ENCODE measurements at regions of chr15 and their contacts with region 1.

Region 1: GRCh38 chr15:65638681-65639089 is 16.9 kb downstream of the SLC24A1 start:
- DNase-seq: peak; percentile 79
- H3K4me3 ChIP-seq: no peak overlapping the region; a peak in 1 of 4 replicates
- H3K27ac ChIP-seq: no peak overlapping the region
- H3K4me1 ChIP-seq: peaks cover 0 to 7% of the 10 kb centered on the region in 2 experiments; a peak in 1 of 4 replicates
- H3K27me3 ChIP-seq: no peaks in the 10 kb centered on the region
- CTCF ChIP-seq: peak; percentile 86
- EP300 ChIP-seq: no peak
- RAD21 ChIP-seq: peak; percentile 90

Region 2: GRCh38 chr15:65368302-65369211 is 270.1 kb before region 1 on chr15:
- CTCF ChIA-PET with region 1: no interaction called
- POLR2A ChIA-PET with region 1: no interaction called
- DNase-seq: peak; percentile 64
- H3K4me3 ChIP-seq: no peak overlapping the region
- H3K27ac ChIP-seq: no peak overlapping the region; a peak in 1 of 4 replicates
- H3K4me1 ChIP-seq: peaks cover 0 to 19% of the 10 kb centered on the region in 2 experiments; a peak in 1 of 4 replicates
- H3K27me3 ChIP-seq: no peaks in the 10 kb centered on the region
- CTCF ChIP-seq: no peak
- EP300 ChIP-seq: no peak
- RAD21 ChIP-seq: no peak

Region 3: DNA sequence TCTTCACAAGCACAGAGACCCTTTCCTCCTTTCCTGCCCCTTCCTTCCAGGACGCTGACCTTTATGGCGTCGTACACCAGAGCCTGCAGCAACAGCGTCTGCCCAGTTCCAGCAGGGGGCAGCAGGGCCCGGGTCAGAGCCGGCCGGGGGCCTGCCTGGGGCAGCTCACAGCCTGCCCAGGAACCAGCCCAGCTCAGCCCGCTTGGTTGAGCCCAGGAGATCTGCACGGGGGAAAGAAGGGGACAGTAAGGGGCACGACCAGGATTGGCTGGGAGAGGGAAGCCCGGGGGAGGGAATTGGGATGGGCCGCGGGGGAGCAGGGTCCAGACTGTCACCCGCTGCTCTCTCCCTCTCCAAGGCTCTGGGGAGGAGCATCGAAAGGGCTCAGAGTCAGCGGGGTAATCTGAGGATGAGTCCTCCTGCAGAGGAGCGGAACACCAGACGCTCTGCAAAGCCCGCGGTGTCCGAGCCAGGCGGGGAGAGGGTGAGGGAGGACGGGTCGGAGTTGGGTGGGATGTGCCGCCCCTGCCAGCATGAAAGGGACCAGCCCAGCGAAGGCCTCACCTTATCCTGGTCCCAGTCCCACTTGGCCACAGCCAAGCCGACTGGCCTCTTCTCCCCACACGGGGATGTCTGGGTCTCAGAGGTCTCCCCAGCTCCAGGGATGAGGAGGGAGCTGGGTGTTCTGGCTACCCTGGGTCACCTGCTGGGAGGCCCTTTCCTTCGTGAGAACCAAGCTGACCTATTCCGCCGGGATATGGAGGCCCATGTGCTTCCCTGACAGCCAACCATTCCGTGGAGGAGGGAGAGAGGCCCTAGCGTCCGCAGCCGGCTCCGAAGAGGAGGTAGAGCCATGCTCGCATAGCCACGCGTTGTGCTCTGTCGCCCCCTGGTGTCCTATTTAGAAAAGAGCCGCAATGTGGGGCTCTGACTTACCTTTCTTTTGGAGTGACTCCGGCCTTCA is 253.5 kb before region 1 on chr15:
- CTCF ChIA-PET with region 1: no interaction called
- POLR2A ChIA-PET with region 1: no interaction called
- DNase-seq: peak; percentile 93
- H3K4me3 ChIP-seq: peak overlapping the region; percentile 17 to 50; a peak in 2 of 4 replicates
- H3K27ac ChIP-seq: no peak overlapping the region
- H3K4me1 ChIP-seq: peaks cover 0 to 24% of the 10 kb centered on the region in 2 experiments; a peak in 1 of 4 replicates
- H3K27me3 ChIP-seq: peaks cover 3% of the 10 kb centered on the region; the same call in 1 of the 2 replicates
- CTCF ChIP-seq: peak; percentile 83
- EP300 ChIP-seq: no peak
- RAD21 ChIP-seq: peak; percentile 99

Region 4: DNA sequence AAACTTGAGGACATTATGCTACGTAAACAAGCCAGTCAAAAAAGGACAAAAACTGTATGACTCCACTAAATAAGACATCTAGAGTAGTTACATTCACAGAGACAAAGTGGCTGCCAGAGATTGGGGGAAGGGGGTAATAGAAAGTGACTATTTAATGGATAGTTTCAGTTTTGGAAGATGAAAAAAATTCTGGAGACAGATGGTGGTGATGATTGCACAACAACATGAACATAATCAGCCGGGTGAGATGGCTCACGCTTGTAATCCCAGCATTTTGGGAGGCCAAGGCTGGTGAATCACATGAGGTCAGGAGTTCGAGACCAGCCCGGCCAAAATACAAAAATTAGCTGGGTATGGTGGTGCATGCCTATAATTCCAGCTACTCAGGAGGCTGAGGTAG is 161.8 kb before region 1 on chr15:
- CTCF ChIA-PET with region 1: no interaction called
- POLR2A ChIA-PET with region 1: no interaction called
- DNase-seq: no peak
- H3K4me3 ChIP-seq: no peak overlapping the region
- H3K27ac ChIP-seq: no peak overlapping the region
- H3K4me1 ChIP-seq: no peaks in the 10 kb centered on the region
- H3K27me3 ChIP-seq: no peaks in the 10 kb centered on the region
- CTCF ChIP-seq: no peak
- EP300 ChIP-seq: no peak
- RAD21 ChIP-seq: no peak

Region 5: DNA sequence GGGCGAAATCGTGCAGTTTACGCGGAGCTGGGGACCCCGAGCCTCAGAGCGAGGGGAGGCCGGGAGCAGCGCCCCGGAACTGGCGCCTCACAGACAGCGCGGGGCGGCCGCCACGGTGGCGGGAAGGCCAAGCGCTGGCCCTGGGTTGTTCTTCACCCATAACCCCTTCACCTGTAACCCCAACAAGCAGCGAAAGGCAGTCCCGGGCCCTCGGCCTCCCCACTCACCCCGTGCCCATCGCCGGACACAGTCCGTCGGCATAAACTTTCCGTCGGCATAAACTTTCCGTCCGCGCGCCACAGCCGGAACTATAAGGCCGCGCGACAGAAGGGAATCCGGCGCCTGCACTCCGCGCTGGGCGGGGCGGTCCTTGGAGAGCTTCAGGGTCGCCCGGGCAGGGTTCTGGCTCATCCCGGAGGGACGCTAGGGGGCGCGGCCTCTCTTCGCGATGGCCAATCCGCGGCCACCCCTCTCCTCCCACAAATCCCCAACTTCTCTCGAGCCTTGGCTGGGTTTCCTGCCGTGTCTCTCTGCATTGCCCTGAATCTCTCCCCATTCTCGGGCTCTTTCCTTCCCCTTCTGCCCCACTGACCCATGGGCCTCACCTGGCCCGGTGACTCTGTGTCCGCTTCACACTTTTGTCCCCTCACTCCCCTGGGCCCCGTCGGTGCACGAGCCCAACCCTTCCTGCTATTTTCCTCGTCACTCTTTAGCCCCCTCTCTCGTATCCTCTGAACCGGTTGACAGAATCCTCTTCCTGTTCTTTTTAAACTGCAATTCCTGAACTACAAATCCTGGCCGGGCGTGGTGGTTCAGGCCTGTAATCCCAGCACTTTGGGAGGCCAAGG is 27.6 kb before region 1 on chr15 and contains the start of gene INTS14:
- CTCF ChIA-PET with region 1: interaction called, 23 read pairs
- POLR2A ChIA-PET with region 1: interaction called, 3 read pairs
- DNase-seq: peak; percentile 98
- H3K4me3 ChIP-seq: peak within 1 kb of the TSS; percentile 77 to 99
- H3K27ac ChIP-seq: peak within 1 kb of the TSS; percentile 83 to 93
- H3K4me1 ChIP-seq: peaks cover 14 to 16% of the 10 kb centered on the region in 2 experiments; a peak in 3 of 4 replicates
- H3K27me3 ChIP-seq: no peaks in the 10 kb centered on the region
- CTCF ChIP-seq: peak; percentile 54
- EP300 ChIP-seq: peak in 1 of 2 experiments; percentile 44; a peak in 1 of 4 replicates
- RAD21 ChIP-seq: peak; percentile 63
- polyA plus RNA-seq, gene INTS14: 44.9 and 55.5 TPM in 2 replicates

Region 6: DNA sequence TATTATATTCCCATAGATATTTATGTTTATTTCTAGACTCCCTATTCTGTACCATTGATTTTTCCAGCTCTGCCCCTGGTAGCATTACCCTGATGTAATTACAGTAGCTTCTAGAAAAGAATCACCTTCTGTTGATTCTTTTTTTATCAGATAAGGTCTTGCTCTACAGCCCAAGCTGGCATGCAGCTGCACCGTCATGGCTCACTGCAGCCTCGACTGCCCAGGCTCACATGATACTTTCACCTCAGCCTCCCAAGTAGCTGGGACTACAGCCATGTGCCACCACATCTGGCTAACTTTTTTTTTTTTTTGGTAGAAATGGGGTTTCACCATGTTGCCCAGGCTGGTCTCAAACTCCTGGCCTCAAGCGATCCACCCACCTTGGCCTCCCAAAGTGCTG is 24.8 kb after region 1 on chr15:
- CTCF ChIA-PET with region 1: interaction called, 12 read pairs
- POLR2A ChIA-PET with region 1: no interaction called
- DNase-seq: no peak
- H3K4me3 ChIP-seq: no peak overlapping the region
- H3K27ac ChIP-seq: no peak overlapping the region
- H3K4me1 ChIP-seq: no peaks in the 10 kb centered on the region; a peak in 1 of 4 replicates
- H3K27me3 ChIP-seq: no peaks in the 10 kb centered on the region
- CTCF ChIP-seq: no peak
- EP300 ChIP-seq: no peak
- RAD21 ChIP-seq: no peak

Region 7: DNA sequence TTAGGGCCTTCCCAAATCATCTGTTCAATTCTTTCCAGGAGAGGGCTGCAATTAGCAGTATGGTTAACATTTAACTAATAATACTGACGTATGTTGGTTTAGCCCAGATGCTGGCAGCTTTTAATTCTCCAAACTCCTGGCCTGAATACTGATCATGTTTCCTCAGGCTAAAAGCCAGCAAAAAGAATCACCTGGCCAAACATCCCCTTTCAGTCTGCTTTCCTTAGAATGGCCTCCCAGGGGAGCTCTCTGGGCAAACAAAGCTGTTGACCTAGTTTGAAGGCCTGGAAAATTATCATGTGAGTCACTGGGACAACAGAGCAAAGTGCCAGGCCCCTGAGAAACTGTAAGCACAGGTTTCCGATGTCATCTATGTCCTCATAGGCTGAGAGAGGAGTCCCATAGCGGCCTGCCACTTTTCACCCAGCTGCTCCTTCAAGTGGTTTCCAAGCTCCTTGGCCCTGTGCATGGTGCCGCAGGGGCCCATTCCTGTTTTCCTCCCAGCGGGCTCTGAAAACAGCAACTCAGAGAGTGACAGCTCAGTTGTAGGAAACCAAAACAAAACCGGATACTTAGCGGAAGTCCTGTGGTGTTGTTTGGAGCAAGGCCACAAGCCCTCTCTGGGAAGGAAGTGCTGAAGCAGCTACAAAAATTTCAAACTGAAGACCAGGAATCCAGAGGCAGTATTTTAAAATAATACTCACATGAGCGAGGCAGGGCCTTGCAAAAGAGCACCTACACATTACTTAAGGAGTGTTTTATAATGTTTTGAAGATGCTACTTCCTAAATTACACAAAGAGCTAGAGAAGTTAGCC is 194.1 kb after region 1 on chr15:
- CTCF ChIA-PET with region 1: interaction called, 65 read pairs
- POLR2A ChIA-PET with region 1: no interaction called
- DNase-seq: peak; percentile 39
- H3K4me3 ChIP-seq: no peak overlapping the region
- H3K27ac ChIP-seq: peak overlapping the region; percentile 66 to 67
- H3K4me1 ChIP-seq: peaks cover 9 to 15% of the 10 kb centered on the region in 2 experiments; a peak in 3 of 4 replicates
- H3K27me3 ChIP-seq: no peaks in the 10 kb centered on the region
- CTCF ChIP-seq: peak; percentile 46
- EP300 ChIP-seq: no peak
- RAD21 ChIP-seq: peak; percentile 15; the same call in 1 of the 2 replicates

Region 8: GRCh38 chr15:65869127-65869953 is 230.7 kb after region 1 on chr15 and contains the start of gene RAB11A:
- CTCF ChIA-PET with region 1: interaction called, 23 read pairs
- POLR2A ChIA-PET with region 1: no interaction called
- DNase-seq: peak; percentile 95
- H3K4me3 ChIP-seq: peak within 1 kb of the TSS; percentile 80 to 97
- H3K27ac ChIP-seq: peak within 1 kb of the TSS; percentile 91 to 93
- H3K4me1 ChIP-seq: peaks cover 0 to 5% of the 10 kb centered on the region in 2 experiments; a peak in 2 of 4 replicates
- H3K27me3 ChIP-seq: no peaks in the 10 kb centered on the region
- CTCF ChIP-seq: peak; percentile 45
- EP300 ChIP-seq: peak in 1 of 2 experiments; percentile 22; a peak in 1 of 4 replicates
- RAD21 ChIP-seq: peak; percentile 27; the same call in 1 of the 2 replicates
- polyA plus RNA-seq, gene RAB11A: 293 and 352 TPM in 2 replicates

Region 9: DNA sequence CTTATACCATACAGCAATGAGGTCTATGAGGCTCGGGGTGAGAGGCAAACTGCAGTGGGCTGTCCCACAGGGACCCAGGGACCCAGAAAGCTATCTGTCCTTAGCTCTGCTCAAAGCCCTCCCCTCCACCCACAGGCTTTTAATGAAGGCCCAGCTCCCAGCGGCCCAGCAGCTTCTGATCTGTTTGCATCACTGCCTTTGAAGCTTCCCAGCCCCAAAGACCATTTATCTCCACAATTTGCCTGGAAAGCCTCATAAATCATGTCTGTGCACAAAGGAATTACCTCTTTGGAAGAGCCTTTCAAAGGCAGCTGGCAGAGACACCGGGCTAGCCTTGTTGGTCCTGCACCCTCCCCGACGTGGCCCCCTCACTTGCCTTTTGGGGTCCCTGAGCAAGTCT is 354.6 kb after region 1 on chr15:
- CTCF ChIA-PET with region 1: no interaction called
- POLR2A ChIA-PET with region 1: no interaction called
- DNase-seq: peak; percentile 53
- H3K4me3 ChIP-seq: no peak overlapping the region
- H3K27ac ChIP-seq: no peak overlapping the region; a peak in 1 of 4 replicates
- H3K4me1 ChIP-seq: peaks cover 0 to 30% of the 10 kb centered on the region in 2 experiments; a peak in 1 of 4 replicates
- H3K27me3 ChIP-seq: peaks cover 16% of the 10 kb centered on the region; the same call in 1 of the 2 replicates
- CTCF ChIP-seq: no peak
- EP300 ChIP-seq: no peak
- RAD21 ChIP-seq: no peak